Aorta (tissue), 5 donors: ENCODE measurements at regions of chr4 and their contacts with region 1.

Region 1: DNA sequence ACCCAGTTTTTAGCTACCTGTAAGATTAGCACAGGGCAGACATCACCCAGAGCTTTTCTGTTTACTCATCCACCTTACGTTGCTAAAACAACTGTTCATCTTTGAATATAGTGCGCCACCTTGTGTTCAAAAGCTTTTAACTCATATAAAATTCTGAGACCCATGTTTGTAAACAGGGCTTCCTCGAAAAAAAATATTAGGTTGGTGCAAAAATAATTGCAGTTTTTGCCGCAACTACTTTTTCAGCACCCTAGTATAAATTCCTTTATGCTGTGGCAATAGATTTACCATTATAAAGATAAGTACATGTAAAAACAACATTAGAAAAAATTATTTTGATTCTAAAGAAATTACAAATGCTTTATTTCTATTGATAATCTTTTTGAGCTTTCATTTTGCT is 147.9 kb downstream of the LRBA start:
- DNase-seq: no peak
- ATAC-seq: peak; percentile 75
- H3K4me3 ChIP-seq: no peak overlapping the region
- H3K27ac ChIP-seq: no peak overlapping the region
- H3K4me1 ChIP-seq: no peaks in the 10 kb centered on the region
- H3K27me3 ChIP-seq: no peaks in the 10 kb centered on the region

Region 2: GRCh38 chr4:149980941-149981340 is 886.2 kb before region 1 on chr4:
- intact Hi-C with region 1: loop called in 1 of 2 experiments (anchors 5 kb)
- DNase-seq: peak; percentile 52 to 71
- ATAC-seq: peak; percentile 70
- H3K4me3 ChIP-seq: no peak overlapping the region
- H3K27ac ChIP-seq: no peak overlapping the region
- H3K4me1 ChIP-seq: no peaks in the 10 kb centered on the region
- H3K27me3 ChIP-seq: no peaks in the 10 kb centered on the region

Region 3: GRCh38 chr4:150302553-150302952 is 564.6 kb before region 1 on chr4:
- intact Hi-C with region 1: loop called in 1 of 2 experiments (anchors 5 kb)
- DNase-seq: no peak
- ATAC-seq: peak; percentile 71
- H3K4me3 ChIP-seq: no peak overlapping the region
- H3K27ac ChIP-seq: no peak overlapping the region
- H3K4me1 ChIP-seq: no peaks in the 10 kb centered on the region
- H3K27me3 ChIP-seq: no peaks in the 10 kb centered on the region

Region 4: GRCh38 chr4:150402871-150403272 is 464.3 kb before region 1 on chr4:
- intact Hi-C with region 1: no loop called
- DNase-seq: no peak
- ATAC-seq: no peak
- H3K4me3 ChIP-seq: no peak overlapping the region
- H3K27ac ChIP-seq: no peak overlapping the region
- H3K4me1 ChIP-seq: no peaks in the 10 kb centered on the region
- H3K27me3 ChIP-seq: no peaks in the 10 kb centered on the region

Region 5: GRCh38 chr4:150722908-150723362 is 144.2 kb before region 1 on chr4:
- intact Hi-C with region 1: no loop called
- DNase-seq: peak; percentile 86 to 88
- ATAC-seq: peak; percentile 93
- H3K4me3 ChIP-seq: no peak overlapping the region
- H3K27ac ChIP-seq: no peak overlapping the region
- H3K4me1 ChIP-seq: peaks cover 0 to 6% of the 10 kb centered on the region in 2 donors
- H3K27me3 ChIP-seq: no peaks in the 10 kb centered on the region